Transverse colon (tissue), 4 donors: ENCODE measurements at regions of chrX and their contacts with region 1.

Region 1: DNA sequence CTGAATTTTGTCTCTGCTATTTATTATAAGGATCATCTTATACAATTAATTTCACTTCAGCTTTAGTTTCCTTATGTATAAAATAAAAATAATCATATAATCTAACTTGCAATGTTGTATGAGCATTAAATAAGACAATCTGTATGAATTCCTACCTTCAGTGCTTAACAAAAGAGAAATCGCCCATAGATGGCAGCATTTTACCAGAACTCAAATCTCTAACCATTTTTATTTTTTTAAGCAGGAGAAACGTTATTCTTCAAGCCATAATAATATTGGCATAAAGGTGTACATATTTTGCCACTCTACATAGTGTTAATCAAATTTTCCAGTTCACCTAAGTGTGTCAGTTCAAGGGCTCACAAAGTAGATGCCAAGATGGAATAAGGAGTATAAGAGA is 78.8 kb downstream of the TMEM47 start:
- DNase-seq: no peak
- H3K4me3 ChIP-seq: no peak overlapping the region
- H3K27ac ChIP-seq: no peak overlapping the region
- H3K4me1 ChIP-seq: no peaks in the 10 kb centered on the region
- H3K27me3 ChIP-seq: no peaks in the 10 kb centered on the region
- CTCF ChIP-seq: peak in 2 of 5 experiments; percentile 11 to 24
- EP300 ChIP-seq: no peak
- POLR2A ChIP-seq: no peak

Region 2: DNA sequence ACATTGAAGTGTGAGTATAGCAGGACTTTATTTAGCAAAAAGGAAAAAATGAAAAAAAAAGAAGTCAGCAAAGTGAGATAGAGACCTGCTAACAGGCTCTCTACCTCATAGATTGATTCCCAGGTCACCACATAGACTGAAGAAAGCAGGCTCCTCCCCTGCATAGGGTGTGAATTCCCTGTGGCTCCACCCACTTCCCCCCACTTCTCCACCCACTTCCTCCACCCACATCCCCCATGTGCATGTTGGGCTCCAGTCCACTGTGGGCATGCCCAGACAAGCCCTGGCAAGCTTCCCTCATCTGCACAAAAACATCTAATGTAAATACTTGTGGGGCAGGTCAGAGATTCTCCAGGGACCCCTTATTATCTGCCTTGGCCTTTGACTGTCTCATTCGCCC is 18.9 kb before region 1 on chrX:
- in situ Hi-C with region 1: no loop called
- intact Hi-C with region 1: loop called (anchors 1 kb)
- DNase-seq: no peak
- H3K4me3 ChIP-seq: no peak overlapping the region
- H3K27ac ChIP-seq: no peak overlapping the region
- H3K4me1 ChIP-seq: no peaks in the 10 kb centered on the region
- H3K27me3 ChIP-seq: no peaks in the 10 kb centered on the region
- CTCF ChIP-seq: no peak
- EP300 ChIP-seq: no peak
- POLR2A ChIP-seq: no peak